ENCODE measurements at regions of chr5 and their contacts with region 1.

Region 1: DNA sequence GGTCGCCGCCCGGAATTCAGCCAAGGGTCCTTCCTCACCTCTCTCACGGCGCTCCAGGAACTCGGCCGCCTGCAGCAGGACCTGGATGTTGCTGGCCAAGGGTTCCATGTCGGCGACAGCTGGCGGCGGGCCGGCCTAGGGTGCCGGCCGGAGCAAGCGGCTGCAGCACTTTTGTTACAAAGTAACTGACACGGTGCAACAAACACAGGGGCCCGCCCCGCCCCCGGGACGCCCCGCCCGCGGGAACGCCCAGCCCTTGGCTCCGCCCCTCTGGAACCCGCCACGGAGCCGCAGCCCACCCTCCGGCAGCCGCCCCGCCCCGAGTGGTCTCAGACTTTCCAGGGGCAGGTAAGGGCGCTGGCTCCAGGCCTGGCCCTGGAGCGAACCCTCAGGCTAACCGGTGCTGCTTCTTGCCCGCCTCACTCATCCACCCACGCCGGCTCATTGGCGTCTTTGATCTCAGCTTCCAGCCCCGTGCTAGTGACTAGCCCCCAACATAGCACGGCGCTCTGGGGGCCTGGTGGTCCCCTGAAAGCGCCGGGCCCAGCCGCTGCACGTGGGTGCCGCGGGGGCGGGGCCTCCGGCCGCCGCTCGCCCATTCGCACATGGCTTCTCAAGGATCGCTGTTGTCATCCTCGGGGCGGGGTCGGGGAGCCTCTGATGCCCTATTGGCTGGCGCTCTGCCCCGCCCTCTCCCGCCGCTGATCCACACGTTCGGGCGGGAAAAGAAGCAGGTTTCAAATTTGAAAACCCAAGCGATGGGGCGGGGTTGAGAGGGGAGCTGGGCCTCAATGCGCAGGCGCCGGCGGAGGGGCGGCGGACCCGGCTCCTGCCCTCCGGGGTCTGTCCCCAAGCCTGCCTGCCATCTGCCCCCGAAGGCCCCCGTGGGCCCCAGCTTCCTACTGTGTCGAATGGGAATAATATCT is at the start of gene MXD3:
- DNase-seq: peak; percentile 98

Region 2: DNA sequence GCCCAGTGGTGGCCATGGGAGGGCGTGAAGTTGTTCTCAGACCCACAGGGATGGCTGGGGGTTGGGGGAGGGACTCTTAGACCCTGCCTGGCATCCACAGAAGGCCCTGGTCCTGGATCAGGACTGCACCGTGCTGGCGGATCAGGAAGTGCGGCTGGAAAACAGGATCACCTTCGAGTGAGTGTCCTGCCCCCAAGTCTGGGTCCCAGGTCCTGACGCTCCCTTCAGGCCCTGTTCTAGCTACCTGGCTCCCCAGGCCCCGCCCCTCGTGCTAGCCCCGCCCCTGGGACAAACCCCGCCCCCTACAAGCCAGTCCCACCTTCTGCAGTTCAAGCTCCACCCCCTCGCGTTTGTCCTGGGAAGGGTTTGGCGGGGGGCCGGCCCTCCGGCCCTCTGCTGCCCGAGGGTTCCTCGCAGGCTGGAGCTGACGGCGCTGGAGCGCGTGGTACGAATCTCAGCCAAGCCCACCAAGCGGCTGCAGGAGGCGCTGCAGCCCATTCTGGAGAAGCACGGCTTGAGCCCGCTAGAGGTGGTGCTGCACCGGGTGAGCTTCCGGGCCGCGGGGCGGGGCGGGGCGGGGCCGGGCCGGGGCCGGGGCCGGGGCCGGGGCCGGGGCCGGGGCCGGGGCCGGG is 58.6 kb after region 1 on chr5:
- CTCF ChIA-PET with region 1: interaction called, 10 read pairs
- POLR2A ChIA-PET with region 1: interaction called, 7 read pairs
- DNase-seq: peak; percentile 97